GM10248 (cell line): ENCODE measurements at regions of chr4 and their contacts with region 1.

Region 1: GRCh38 chr4:26081795-26082498 is 167.9 kb downstream of the SMIM20 start:
- DNase-seq: peak; percentile 29
- CTCF ChIP-seq: peak; percentile 40

Region 2: GRCh38 chr4:26028793-26029567 is 53.0 kb before region 1 on chr4:
- CTCF ChIA-PET with region 1: interaction called, 11 read pairs
- POLR2A ChIA-PET with region 1: no interaction called
- DNase-seq: peak; percentile 87
- CTCF ChIP-seq: peak; percentile 97

Region 3: DNA sequence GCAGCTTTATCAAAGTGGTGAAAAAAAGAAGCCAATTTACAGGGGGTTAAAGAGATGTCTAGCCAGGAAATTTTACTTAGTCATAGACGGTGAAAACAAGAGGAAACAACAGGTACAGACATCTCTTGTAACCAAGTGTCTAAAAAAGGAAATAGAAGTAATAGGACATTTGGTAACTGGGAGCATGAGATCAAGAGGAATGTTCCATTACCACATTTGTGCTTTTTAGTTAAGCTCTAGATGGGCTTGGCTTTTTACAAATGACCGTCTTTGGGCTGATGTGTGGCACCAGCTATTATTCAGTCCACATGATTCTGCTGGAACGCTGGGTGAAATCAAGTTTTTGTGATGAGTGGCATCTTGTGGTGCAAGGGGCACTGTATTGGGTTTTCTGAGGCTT is 11.6 kb after region 1 on chr4:
- CTCF ChIA-PET with region 1: interaction called, 27 read pairs
- POLR2A ChIA-PET with region 1: no interaction called
- DNase-seq: no peak
- CTCF ChIP-seq: no peak

Region 4: DNA sequence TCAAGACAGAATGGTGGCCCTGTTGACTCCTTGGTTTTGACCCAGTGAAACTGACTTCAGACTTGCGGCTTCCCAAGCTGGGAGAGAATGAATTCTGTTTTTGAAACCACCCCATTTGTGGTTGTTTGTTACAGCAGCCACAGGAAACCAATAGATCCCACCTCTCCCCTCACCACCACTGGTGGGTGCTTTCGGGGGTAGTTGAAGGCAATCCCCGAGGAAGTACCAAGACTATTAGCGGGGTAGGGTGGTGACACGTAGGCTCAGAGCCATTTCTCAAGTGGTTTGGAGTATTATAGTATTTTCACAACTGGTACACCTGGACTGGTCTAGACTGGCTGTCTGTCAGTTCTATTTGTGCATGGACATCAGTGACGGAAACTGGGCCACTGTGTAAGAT is 49.8 kb after region 1 on chr4:
- CTCF ChIA-PET with region 1: interaction called, 24 read pairs
- POLR2A ChIA-PET with region 1: no interaction called
- DNase-seq: peak; percentile 39
- CTCF ChIP-seq: no peak

Region 5: DNA sequence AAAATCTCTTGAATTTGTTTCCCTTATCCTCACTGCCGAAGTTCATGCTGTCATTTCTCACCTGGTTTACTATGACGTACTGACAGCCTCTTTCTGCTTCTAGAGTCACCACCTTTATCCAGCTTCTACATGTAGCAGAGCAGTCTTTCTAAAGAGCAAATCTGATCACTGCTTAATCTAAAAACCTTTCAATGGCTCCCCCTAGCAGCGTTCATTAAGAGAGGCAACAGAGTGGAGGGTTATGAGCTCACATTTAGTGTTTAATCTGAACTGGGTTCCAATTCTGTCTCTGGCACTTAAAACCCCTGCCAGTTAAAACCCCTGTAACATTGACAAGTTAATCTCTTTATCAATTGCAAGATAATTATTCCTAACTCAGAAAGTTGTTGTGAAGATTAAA is 243.2 kb after region 1 on chr4:
- CTCF ChIA-PET with region 1: interaction called, 12 read pairs
- POLR2A ChIA-PET with region 1: interaction called, 7 read pairs
- DNase-seq: no peak
- CTCF ChIP-seq: peak; percentile 56

Region 6: GRCh38 chr4:26410385-26411293 is 328.7 kb after region 1 on chr4:
- CTCF ChIA-PET with region 1: no interaction called
- POLR2A ChIA-PET with region 1: no interaction called
- DNase-seq: peak; percentile 55
- CTCF ChIP-seq: peak; percentile 53